ENCODE measurements at regions of chr14 and their contacts with region 1.

Region 1: DNA sequence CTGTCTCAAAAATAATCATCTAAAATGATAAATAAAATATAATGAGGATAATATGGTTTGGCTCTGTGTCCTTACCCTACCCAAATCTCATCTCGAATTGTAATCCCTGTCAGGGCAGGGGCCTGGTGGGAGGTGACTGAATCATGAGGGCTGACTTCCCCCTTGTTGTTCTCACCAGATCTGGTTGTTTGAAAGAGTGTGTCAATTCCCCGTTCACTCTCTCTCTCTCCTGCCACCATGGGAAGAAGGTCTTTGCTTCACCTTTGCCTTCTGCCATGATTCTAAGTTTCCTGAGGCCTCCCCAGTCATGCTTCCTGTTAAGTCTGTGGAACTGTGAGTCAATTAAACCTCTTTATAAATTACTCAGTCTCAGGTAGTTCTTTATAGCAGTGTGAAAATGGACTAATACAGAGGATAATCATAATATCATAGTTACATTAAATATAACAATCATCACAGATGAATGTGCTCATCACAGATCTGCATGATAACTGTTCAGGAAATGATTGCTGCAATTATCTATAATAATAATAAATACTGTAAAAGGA is 12.6 kb downstream of the EFCAB11 start:
- DNase-seq: no peak
- ATAC-seq: no peak
- H3K4me3 ChIP-seq: no peak overlapping the region
- H3K27ac ChIP-seq: no peak overlapping the region
- H3K4me1 ChIP-seq: no peaks in the 10 kb centered on the region
- CTCF ChIP-seq: no peak
- EP300 ChIP-seq: no peak
- POLR2A ChIP-seq: no peak
- RAD21 ChIP-seq: no peak

Region 2: GRCh38 chr14:90235179-90235976 is 293.5 kb after region 1 on chr14:
- CTCF ChIA-PET with region 1: interaction called, 11 read pairs
- POLR2A ChIA-PET with region 1: no interaction called
- DNase-seq: peak; percentile 65 to 76
- ATAC-seq: peak; percentile 89 to 95
- H3K4me3 ChIP-seq: no peak overlapping the region
- H3K27ac ChIP-seq: no peak overlapping the region
- H3K4me1 ChIP-seq: no peaks in the 10 kb centered on the region
- CTCF ChIP-seq: peak; percentile 83
- EP300 ChIP-seq: no peak
- POLR2A ChIP-seq: no peak
- RAD21 ChIP-seq: peak; percentile 83 to 89

Measured in A549 (cell line).